ENCODE measurements at regions of chr1 and their contacts with region 1.

Region 1: DNA sequence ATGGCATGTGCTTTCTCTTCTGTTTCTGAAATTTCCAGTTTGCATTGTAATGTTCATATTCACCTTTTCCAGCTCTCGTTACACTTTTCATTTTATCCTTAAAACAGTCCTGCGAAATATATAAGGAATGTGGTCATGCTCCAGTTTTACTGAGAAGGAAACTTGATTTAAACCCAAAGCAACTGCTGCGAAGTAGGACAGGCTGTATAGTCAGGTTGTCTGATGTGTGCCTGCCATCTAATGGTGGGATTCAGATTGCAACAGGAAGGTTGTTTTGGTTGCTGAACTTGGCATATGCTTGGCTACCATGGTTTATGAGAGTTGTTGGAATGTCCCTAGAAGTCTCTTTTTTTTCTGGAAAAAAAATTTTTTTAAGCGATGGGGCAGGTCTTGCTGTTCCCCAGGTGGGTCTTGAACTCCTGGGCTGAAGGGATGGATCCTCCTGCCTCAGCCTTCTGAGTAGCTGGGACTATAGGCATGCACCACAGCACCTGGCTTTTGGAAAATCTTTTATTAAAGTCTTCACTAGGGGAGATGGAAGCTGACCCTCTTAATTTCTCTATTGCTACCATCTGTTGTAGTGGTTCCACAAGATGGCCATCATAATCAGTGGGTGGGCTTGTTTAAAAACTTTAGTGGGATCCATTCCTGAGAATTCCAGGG is 86.9 kb downstream of the UCK2 start:
- DNase-seq: peak; percentile 54
- ATAC-seq: peak; percentile 80
- H3K4me3 ChIP-seq: no peak overlapping the region
- H3K27ac ChIP-seq: no peak overlapping the region
- H3K4me1 ChIP-seq: no peaks in the 10 kb centered on the region
- H3K27me3 ChIP-seq: no peaks in the 10 kb centered on the region
- CTCF ChIP-seq: peak; percentile 80 to 93 (median 92)
- POLR2A ChIP-seq: no peak
- RAD21 ChIP-seq: peak; percentile 96

Region 2: GRCh38 chr1:165144757-165145397 is 769.4 kb before region 1 on chr1:
- CTCF ChIA-PET with region 1: no interaction called
- POLR2A ChIA-PET with region 1: no interaction called
- RAD21 ChIA-PET with region 1: no interaction called
- intact Hi-C with region 1: no loop called
- DNase-seq: peak; percentile 47
- ATAC-seq: peak; percentile 95
- H3K4me3 ChIP-seq: no peak overlapping the region
- H3K27ac ChIP-seq: no peak overlapping the region
- H3K4me1 ChIP-seq: no peaks in the 10 kb centered on the region
- H3K27me3 ChIP-seq: peaks cover 5% of the 10 kb centered on the region; the same call in 1 of the 2 replicates
- CTCF ChIP-seq: peak; percentile 67 to 83 (median 80)
- POLR2A ChIP-seq: no peak
- RAD21 ChIP-seq: peak; percentile 67

Region 3: GRCh38 chr1:165392634-165393571 is 521.4 kb before region 1 on chr1:
- CTCF ChIA-PET with region 1: interaction called, 3 read pairs
- POLR2A ChIA-PET with region 1: no interaction called
- RAD21 ChIA-PET with region 1: no interaction called
- intact Hi-C with region 1: loop called (anchors 5 kb)
- DNase-seq: peak; percentile 55
- ATAC-seq: peak; percentile 99
- H3K4me3 ChIP-seq: no peak overlapping the region
- H3K27ac ChIP-seq: no peak overlapping the region
- H3K4me1 ChIP-seq: peaks cover 4 to 7% of the 10 kb centered on the region in 2 experiments; a peak in 2 of 4 replicates
- H3K27me3 ChIP-seq: peaks cover 38% of the 10 kb centered on the region
- CTCF ChIP-seq: peak; percentile 63 to 94 (median 91)
- POLR2A ChIP-seq: no peak
- RAD21 ChIP-seq: peak; percentile 86

Region 4: DNA sequence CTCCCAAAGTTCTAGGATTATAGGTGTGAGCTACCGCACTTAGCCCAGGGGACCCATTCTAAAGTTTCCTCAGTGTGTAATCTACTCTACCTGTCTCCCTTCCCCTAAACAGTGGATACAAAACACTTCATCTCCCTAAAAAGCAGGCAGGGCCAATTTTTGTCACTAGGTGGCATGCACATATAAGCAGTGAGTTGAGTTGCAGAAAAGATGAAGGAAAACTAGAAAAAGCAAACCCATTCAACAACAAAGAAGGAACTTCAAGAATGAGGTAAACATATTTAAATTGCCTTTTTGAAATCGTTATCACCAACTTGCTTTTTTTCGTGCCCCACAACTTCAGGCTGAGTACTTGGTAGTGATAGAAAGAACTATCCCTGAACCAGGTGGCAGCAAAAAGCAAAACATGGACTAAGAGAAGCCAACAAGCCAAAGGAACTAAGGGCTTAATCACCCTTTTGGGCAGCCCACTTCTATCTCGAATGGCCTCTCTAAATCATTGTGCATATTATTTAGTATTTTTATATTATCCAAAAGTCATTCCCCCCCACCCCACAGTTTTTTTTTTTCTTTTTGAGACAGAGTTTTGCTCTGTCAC is 196.2 kb before region 1 on chr1:
- CTCF ChIA-PET with region 1: no interaction called
- POLR2A ChIA-PET with region 1: no interaction called
- RAD21 ChIA-PET with region 1: interaction called in 1 of 2 experiments, 3 read pairs
- intact Hi-C with region 1: loop called (anchors 1 kb)
- DNase-seq: peak; percentile 48
- ATAC-seq: peak; percentile 90
- H3K4me3 ChIP-seq: no peak overlapping the region
- H3K27ac ChIP-seq: no peak overlapping the region
- H3K4me1 ChIP-seq: no peaks in the 10 kb centered on the region
- H3K27me3 ChIP-seq: no peaks in the 10 kb centered on the region
- CTCF ChIP-seq: peak; percentile 80 to 89 (median 82)
- POLR2A ChIP-seq: no peak
- RAD21 ChIP-seq: peak; percentile 93

Region 5: GRCh38 chr1:165827268-165828102 is 86.8 kb before region 1 on chr1 and contains the start of gene UCK2:
- CTCF ChIA-PET with region 1: no interaction called
- POLR2A ChIA-PET with region 1: no interaction called
- RAD21 ChIA-PET with region 1: no interaction called
- intact Hi-C with region 1: loop called (anchors 5 kb)
- DNase-seq: peak; percentile 58
- ATAC-seq: peak; percentile 90
- H3K4me3 ChIP-seq: peak within 1 kb of the TSS; percentile 69 to 70
- H3K27ac ChIP-seq: peak within 1 kb of the TSS; percentile 90
- H3K4me1 ChIP-seq: peaks cover 13 to 18% of the 10 kb centered on the region in 2 experiments; a peak in 3 of 4 replicates
- H3K27me3 ChIP-seq: no peaks in the 10 kb centered on the region
- CTCF ChIP-seq: no peak
- POLR2A ChIP-seq: peak; percentile 84
- RAD21 ChIP-seq: no peak
- total RNA-seq, gene UCK2: 88.4 TPM

Measured in HCT116 (cell line).